GM10248 (cell line): ENCODE measurements at regions of chr12 and their contacts with region 1.

Region 1: DNA sequence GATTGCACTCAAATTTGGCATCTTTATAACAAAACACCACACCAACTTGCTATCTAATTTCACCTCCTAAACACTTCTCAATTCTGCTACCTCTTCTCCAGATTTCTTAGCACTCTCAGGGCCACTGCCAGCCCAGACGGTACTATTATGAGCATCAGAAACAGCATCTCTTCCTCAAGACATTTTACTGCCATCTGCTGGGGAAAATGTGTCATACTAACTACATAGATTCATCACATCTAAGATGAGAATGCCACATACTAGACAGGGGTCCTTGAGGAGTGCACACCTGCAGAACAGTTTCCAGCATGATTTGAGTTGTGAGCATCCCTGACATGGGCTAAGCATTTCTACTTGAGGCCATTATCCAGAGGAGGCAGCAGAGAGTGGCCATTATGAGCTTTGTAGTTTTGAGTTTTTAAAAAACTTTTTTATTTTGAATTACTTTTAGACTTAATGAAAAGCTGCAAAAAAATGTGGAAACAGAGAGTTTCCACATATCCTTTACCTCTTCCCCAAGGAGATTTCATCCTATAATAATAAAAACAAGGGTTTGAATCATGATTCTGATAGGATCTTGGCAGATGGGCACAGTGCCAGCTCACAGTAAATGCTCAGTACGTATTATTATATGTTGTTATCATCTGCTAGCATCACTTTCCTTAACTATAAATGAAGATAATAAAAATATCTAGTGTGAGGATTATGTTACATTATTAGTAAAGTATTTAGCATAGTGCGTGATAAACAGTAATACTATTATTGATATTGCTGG is 15.2 kb upstream of the GRIP1 start:
- DNase-seq: peak; percentile 43
- CTCF ChIP-seq: peak; percentile 57

Region 2: DNA sequence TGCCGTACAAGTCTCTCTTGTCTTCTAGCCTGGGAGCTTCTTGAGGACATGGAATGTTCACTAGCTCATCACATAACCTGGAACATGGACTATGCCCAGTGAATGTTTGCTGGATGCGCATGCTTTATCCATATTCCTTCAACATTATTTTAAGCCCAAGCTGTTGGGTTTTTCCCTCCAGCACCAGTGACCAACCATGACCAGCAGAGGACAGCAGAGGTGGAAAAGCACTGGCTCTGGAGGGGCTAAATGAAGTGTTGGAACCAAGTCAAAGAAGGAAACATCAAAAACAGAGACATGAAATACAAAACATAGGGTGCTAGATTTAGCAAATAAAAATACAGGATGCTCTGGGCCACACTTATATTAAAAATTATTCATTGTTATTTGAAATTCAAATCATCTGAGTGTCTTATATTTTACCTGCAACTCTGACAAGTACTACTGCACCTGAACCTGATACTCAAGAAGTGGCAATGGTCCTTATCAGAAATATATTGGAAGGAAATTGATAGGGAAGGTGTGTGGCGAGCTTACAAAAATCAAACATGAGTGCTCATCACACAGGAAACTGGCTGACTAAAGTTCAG is 414.9 kb before region 1 on chr12:
- CTCF ChIA-PET with region 1: interaction called, 58 read pairs
- POLR2A ChIA-PET with region 1: no interaction called
- DNase-seq: no peak
- CTCF ChIP-seq: peak; percentile 64

Region 3: DNA sequence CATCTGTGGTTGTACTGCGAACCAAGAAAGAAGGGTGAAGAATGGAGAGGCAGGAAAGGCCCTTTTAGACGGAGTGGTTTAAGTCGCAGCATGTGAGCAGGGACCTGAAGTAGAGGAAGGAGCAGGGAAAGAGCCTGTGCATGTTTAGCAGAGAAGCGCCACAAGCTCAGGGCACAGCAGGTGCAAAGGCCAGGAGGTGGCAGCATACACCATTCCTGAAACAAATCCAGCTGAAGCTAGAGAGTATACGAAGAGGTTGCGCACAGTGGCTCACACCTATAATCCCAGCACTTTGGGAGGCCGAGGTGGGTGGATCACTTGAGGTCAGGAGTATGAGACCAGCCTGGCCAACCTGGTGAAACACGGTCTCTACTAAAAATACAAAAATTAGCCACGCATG is 341.9 kb before region 1 on chr12:
- CTCF ChIA-PET with region 1: interaction called, 41 read pairs
- POLR2A ChIA-PET with region 1: no interaction called
- DNase-seq: no peak
- CTCF ChIP-seq: peak; percentile 44

Region 4: DNA sequence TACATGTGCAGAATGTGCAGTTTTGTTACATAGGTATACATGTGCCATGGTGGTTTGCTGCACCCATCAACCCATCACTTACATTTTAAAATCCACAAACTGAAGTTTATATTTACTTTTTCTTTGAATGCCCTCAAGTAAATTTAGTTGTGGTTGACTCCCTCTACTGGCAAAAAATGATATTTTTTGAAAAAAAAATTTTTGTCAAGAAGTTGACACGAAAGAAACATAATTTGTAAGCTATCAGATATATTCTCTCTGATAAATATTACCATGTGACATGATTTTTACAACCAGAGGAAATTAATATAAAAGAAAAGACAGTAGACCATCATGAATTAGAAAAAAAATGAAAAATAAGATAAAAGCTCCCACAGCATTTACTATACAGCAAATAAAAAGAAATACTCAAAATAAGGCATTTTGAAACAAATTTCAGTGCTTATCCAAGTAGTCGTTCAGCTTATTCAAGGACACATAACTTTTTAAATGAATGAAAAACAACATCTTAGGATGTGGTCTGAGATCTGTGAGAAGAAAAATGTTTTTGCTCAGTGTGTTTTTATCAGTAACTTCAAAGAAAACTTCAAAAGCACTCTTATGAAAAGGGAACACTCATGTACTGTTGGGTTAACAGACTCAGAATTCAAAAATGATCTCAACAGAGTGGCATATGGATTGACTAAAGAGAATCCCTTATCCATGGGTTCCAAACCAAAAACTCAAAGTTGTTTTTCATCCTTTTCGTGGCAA is 14.8 kb after region 1 on chr12:
- CTCF ChIA-PET with region 1: interaction called, 26 read pairs
- POLR2A ChIA-PET with region 1: no interaction called
- DNase-seq: no peak
- CTCF ChIP-seq: peak; percentile 32

Region 5: GRCh38 chr12:66860752-66861750 is 167.0 kb after region 1 on chr12:
- CTCF ChIA-PET with region 1: interaction called, 17 read pairs
- POLR2A ChIA-PET with region 1: no interaction called
- DNase-seq: peak; percentile 20
- CTCF ChIP-seq: peak; percentile 96